CD8-positive, alpha-beta T cell (primary cell): ENCODE measurements at regions of chr11 and their contacts with region 1.

Region 1: GRCh38 chr11:83193315-83194280 is at the start of gene ANKRD42:
- DNase-seq: peak; percentile 53 to 96 (median 86)
- ATAC-seq: peak; percentile 67
- H3K4me3 ChIP-seq: peak within 1 kb of the TSS; percentile 70 to 94
- H3K4me3 Mint-ChIP-seq: peak within 1 kb of the TSS; percentile 100
- H3K27ac ChIP-seq: peak within 1 kb of the TSS; percentile 97 to 98
- H3K27ac Mint-ChIP-seq: peak within 1 kb of the TSS; percentile 100
- H3K4me1 ChIP-seq: peaks cover 30% of the 10 kb centered on the region
- H3K4me1 Mint-ChIP-seq: peaks cover 50% of the 10 kb centered on the region
- H3K27me3 ChIP-seq: no peaks in the 10 kb centered on the region
- H3K27me3 Mint-ChIP-seq: no peaks in the 10 kb centered on the region
- CTCF ChIP-seq: no peak
- total RNA-seq, gene ANKRD42: 11.4 to 12.7 TPM

Region 2: GRCh38 chr11:83115551-83115950 is 78.0 kb before region 1 on chr11:
- CTCF ChIA-PET with region 1: no interaction called
- POLR2A ChIA-PET with region 1: no interaction called
- intact Hi-C with region 1: loop called in 1 of 2 experiments (anchors 10 kb)
- DNase-seq: no peak
- ATAC-seq: no peak
- H3K4me3 ChIP-seq: peak overlapping the region in 1 of 2 experiments; percentile 15
- H3K4me3 Mint-ChIP-seq: peak overlapping the region; percentile 74
- H3K27ac ChIP-seq: no peak overlapping the region
- H3K27ac Mint-ChIP-seq: no peak overlapping the region
- H3K4me1 ChIP-seq: peaks cover 44% of the 10 kb centered on the region
- H3K4me1 Mint-ChIP-seq: peaks cover 55% of the 10 kb centered on the region
- H3K27me3 ChIP-seq: no peaks in the 10 kb centered on the region
- H3K27me3 Mint-ChIP-seq: no peaks in the 10 kb centered on the region
- CTCF ChIP-seq: no peak

Region 3: DNA sequence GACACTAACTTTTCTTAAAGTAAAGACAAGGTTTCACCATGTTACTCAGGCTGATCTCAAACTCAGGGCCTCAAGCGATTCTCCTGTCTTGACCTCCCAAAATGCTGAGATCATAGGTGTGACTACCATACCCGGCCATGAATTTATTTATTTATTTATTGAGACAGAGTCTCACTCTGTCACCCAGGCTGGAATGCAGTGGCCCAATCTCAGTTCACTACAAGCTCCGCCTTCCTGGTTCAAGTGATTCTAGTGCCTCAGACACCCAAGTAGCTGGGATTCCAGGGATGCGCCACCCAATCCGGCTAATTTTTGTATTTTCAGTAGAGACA is 66.3 kb before region 1 on chr11:
- CTCF ChIA-PET with region 1: no interaction called
- POLR2A ChIA-PET with region 1: no interaction called
- intact Hi-C with region 1: no loop called
- DNase-seq: no peak
- ATAC-seq: no peak
- H3K4me3 ChIP-seq: no peak overlapping the region
- H3K4me3 Mint-ChIP-seq: no peak overlapping the region
- H3K27ac ChIP-seq: no peak overlapping the region
- H3K27ac Mint-ChIP-seq: no peak overlapping the region
- H3K4me1 ChIP-seq: peaks cover 10% of the 10 kb centered on the region
- H3K4me1 Mint-ChIP-seq: peaks cover 12% of the 10 kb centered on the region
- H3K27me3 ChIP-seq: no peaks in the 10 kb centered on the region
- H3K27me3 Mint-ChIP-seq: no peaks in the 10 kb centered on the region
- CTCF ChIP-seq: no peak

Region 4: DNA sequence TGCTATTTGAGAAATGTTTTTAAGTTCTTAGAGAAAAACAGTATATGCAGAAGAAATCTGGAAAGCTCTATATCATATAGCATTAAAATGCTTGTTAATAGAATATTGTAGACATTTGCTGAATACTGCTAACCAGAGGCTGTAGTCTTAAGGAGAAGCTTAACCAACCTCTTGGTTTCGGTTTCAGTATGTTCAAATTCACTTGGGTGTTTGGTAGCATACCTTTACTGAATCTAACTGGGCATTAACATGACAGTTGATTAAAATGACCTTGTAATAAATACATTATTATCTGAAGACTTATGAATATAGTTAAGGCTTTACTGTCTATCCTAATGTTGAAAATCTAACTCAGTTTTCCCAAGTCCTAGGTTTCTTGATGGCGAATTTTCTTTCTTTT is 31.2 kb before region 1 on chr11:
- CTCF ChIA-PET with region 1: interaction called, 3 read pairs
- POLR2A ChIA-PET with region 1: interaction called, 29 read pairs
- intact Hi-C with region 1: loop called in 1 of 2 experiments (anchors 1 kb)
- DNase-seq: peak in 2 of 9 experiments; percentile 57 to 73
- ATAC-seq: peak; percentile 46
- H3K4me3 ChIP-seq: no peak overlapping the region
- H3K4me3 Mint-ChIP-seq: peak overlapping the region; percentile 68
- H3K27ac ChIP-seq: peak overlapping the region in 1 of 2 experiments; percentile 97
- H3K27ac Mint-ChIP-seq: peak overlapping the region; percentile 83
- H3K4me1 ChIP-seq: peaks cover 34% of the 10 kb centered on the region
- H3K4me1 Mint-ChIP-seq: peaks cover 70% of the 10 kb centered on the region
- H3K27me3 ChIP-seq: no peaks in the 10 kb centered on the region
- H3K27me3 Mint-ChIP-seq: no peaks in the 10 kb centered on the region
- CTCF ChIP-seq: no peak

Region 5: DNA sequence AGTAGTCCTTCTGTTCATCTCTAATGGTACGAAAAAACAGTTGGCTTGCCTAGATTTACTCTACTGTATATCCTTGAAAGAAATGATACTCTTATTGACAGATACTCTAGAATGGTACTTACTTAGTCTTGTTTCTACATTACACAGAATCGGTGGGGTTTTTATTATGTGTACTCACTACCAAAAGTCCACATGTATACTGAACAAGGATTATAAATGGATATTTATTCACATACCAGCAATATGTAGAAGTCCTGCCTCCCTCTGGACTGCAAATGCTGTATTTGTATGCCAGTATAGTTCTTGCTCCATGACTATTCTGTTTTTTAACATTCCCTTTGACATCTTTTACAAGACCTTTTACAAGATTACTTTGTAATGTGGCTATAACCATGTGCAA is 22.7 kb before region 1 on chr11:
- CTCF ChIA-PET with region 1: interaction called, 3 read pairs
- POLR2A ChIA-PET with region 1: no interaction called
- intact Hi-C with region 1: loop called (anchors 2 kb)
- DNase-seq: no peak
- ATAC-seq: no peak
- H3K4me3 ChIP-seq: peak overlapping the region; percentile 21
- H3K4me3 Mint-ChIP-seq: peak overlapping the region; percentile 78
- H3K27ac ChIP-seq: peak overlapping the region in 1 of 2 experiments; percentile 17
- H3K27ac Mint-ChIP-seq: peak overlapping the region; percentile 15
- H3K4me1 ChIP-seq: peaks cover 72% of the 10 kb centered on the region
- H3K4me1 Mint-ChIP-seq: peaks cover 86% of the 10 kb centered on the region
- H3K27me3 ChIP-seq: no peaks in the 10 kb centered on the region
- H3K27me3 Mint-ChIP-seq: no peaks in the 10 kb centered on the region
- CTCF ChIP-seq: no peak

Region 6: GRCh38 chr11:83285771-83286528 is 92.4 kb after region 1 on chr11 and contains the start of gene CCDC90B:
- CTCF ChIA-PET with region 1: no interaction called
- POLR2A ChIA-PET with region 1: interaction called, 6 read pairs
- intact Hi-C with region 1: loop called (anchors 1 to 2 kb)
- DNase-seq: peak; percentile 87 to 99 (median 94)
- ATAC-seq: peak; percentile 89
- H3K4me3 ChIP-seq: peak within 1 kb of the TSS; percentile 78 to 86
- H3K4me3 Mint-ChIP-seq: peak within 1 kb of the TSS; percentile 98
- H3K27ac ChIP-seq: peak within 1 kb of the TSS; percentile 88 to 99
- H3K27ac Mint-ChIP-seq: peak within 1 kb of the TSS; percentile 100
- H3K4me1 ChIP-seq: peaks cover 23% of the 10 kb centered on the region
- H3K4me1 Mint-ChIP-seq: peaks cover 46% of the 10 kb centered on the region
- H3K27me3 ChIP-seq: no peaks in the 10 kb centered on the region
- H3K27me3 Mint-ChIP-seq: no peaks in the 10 kb centered on the region
- CTCF ChIP-seq: no peak
- total RNA-seq, gene CCDC90B: 22.7 to 24.8 TPM